ENCODE measurements at regions of chr2 and their contacts with region 1.

Region 1: GRCh38 chr2:95389245-95390119 is 13.0 kb upstream of the FAHD2A start:
- DNase-seq: peak; percentile 48 to 69 (median 66)
- H3K4me3 ChIP-seq: no peak overlapping the region
- H3K27ac ChIP-seq: no peak overlapping the region
- H3K4me1 ChIP-seq: no peaks in the 10 kb centered on the region
- H3K27me3 ChIP-seq: peaks cover 0 to 6% (median 0%) of the 10 kb centered on the region in 5 experiments

Region 2: DNA sequence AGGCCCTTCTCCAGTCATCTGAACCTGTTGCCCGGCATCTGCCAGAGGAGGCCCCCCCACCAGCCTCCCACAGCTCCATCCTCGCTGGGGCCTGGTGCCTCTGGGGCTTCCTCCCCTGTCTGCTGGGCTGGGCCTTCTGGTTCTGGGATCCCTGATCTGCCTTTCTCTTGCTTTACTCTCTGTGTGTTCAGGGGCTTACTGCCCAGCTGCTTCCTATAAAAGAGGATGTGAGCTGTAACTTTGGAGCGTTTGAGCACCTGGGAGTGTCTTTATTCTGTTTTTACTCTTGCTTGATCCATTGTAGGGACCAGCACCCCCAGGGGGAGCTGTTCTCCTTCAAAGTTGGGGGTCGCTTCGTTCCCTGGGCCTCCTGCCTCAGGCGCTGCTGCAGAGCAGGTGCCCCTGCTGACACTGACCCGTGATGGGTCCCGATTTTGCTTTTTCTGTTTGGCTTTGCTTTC is 10.1 kb before region 1 on chr2:
- CTCF ChIA-PET with region 1: interaction called, 12 read pairs
- POLR2A ChIA-PET with region 1: no interaction called
- DNase-seq: peak; percentile 23 to 68 (median 52)
- H3K4me3 ChIP-seq: no peak overlapping the region
- H3K27ac ChIP-seq: no peak overlapping the region
- H3K4me1 ChIP-seq: peaks cover 0 to 2% (median 0%) of the 10 kb centered on the region in 4 experiments
- H3K27me3 ChIP-seq: peaks cover 0 to 4% (median 0%) of the 10 kb centered on the region in 5 experiments

Region 3: DNA sequence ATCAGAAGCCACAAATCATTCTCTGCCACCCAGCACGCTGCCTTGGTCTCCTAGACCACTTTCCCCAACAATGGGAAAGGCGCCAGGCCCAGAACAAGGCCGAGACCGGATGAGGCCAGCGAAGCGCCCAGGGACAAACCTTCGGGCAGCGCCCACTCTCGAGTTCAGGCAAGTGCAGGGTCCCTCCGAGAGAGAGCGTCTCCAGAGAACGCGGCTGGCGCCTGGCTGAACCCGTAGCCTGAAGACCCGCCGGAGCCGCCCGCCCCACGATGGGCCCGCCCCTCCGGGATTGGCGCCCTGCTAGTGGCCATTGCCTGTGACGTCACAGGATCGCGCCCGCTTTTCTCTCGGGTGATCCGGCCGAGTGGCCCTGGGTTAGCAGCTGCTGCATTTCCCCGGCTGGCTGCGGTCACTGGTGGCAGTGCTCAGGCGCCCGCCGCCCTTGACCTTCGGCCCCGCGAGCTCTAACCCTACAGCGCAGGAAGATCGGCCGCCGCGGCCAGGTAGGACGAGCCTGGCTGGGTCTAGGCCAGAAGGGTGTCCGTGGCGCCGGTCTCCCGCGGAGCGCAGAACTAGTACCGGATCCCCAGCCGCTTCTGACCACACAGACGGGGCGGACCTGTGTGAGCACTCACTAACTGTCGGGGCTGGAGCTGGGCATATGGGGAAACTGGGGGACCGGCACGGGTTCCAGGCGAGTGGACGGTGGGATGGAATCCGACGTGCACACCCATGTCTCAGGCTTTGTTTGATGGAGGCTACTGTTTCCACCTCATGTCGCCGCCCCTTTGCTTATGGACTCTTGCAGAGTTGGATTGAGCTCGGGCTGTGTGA is 13.1 kb after region 1 on chr2 and contains the start of gene FAHD2A:
- CTCF ChIA-PET with region 1: interaction called, 17 read pairs
- POLR2A ChIA-PET with region 1: interaction called, 3 read pairs
- DNase-seq: peak; percentile 90 to 94 (median 92)
- H3K4me3 ChIP-seq: peak within 1 kb of the TSS; percentile 80 to 96 (median 92)
- H3K27ac ChIP-seq: peak within 1 kb of the TSS; percentile 77 to 87
- H3K4me1 ChIP-seq: peaks cover 0 to 18% (median 15%) of the 10 kb centered on the region in 4 experiments
- H3K27me3 ChIP-seq: no peaks in the 10 kb centered on the region